Heart left ventricle (tissue), 16 donors: ENCODE measurements at regions of chr16 and their contacts with region 1.

Region 1: GRCh38 chr16:31142109-31143010 is 6.8 kb upstream of the PRSS8 start:
- DNase-seq: peak; percentile 99
- ATAC-seq: peak; percentile 98 to 99 (median 98)
- H3K4me3 ChIP-seq: peak overlapping the region; percentile 18 to 67 (median 55)
- H3K27ac ChIP-seq: peak overlapping the region in 11 of 12 donors; percentile 75 to 91 (median 82)
- H3K4me1 ChIP-seq: peaks cover 3 to 39% (median 27%) of the 10 kb centered on the region in 12 donors
- H3K27me3 ChIP-seq: peaks cover 0 to 4% (median 0%) of the 10 kb centered on the region in 9 donors
- CTCF ChIP-seq: peak; percentile 80 to 99 (median 96)
- POLR2A ChIP-seq: peak in 1 of 2 donors; percentile 44

Region 2: DNA sequence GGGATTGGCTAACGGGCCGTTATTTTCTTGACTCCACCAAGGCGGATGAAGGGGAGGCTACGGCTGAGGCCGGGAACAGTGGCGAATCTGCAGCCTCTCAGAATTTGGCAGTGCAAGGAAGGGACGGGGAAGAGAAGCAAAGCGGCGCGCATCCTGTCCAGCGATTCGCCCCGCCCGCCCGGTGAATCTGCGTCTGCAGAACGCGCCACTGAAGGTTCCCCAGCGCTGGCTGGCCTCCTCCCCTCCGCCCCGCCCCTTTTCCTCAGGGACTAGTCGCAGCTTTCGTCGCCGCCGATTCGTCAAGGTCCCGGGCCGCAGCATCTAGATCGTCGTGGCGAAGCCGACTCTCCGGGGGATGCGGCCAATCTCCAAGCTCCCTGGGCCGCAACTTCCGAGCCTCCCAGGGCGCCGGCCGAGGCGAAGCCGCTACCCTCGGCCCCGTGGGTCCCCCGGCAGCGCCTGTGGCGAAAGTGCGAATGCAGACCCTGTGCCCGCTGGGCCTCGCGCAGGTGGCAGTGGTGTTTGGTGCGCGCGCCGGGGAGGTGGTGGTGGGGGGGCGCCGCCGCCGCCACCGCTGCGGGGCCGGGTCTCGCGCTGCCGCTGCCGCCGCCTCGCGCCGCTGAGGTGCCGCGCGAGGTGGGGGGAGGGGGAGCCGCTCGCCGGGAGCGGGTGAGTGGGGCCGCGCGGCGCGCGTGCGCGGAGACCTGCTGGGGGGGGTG is 184.7 kb before region 1 on chr16 and contains the start of gene SETD1A:
- intact Hi-C with region 1: loop called in 1 of 10 experiments (anchors 5 kb)
- DNase-seq: peak; percentile 98 to 99 (median 98)
- ATAC-seq: peak; percentile 90 to 96 (median 91)
- H3K4me3 ChIP-seq: peak within 1 kb of the TSS; percentile 37 to 93 (median 82)
- H3K27ac ChIP-seq: peak within 1 kb of the TSS; percentile 86 to 99 (median 98)
- H3K4me1 ChIP-seq: peaks cover 0 to 37% (median 24%) of the 10 kb centered on the region in 12 donors
- H3K27me3 ChIP-seq: no peaks in the 10 kb centered on the region
- CTCF ChIP-seq: peak in 1 of 12 donors; percentile 7
- POLR2A ChIP-seq: peak in 1 of 2 donors; percentile 44
- total RNA-seq, gene SETD1A: 4.6 to 12.1 (median 9.0) TPM

Region 3: GRCh38 chr16:30997000-30997886 is 145.1 kb before region 1 on chr16:
- intact Hi-C with region 1: loop called in 1 of 10 experiments (anchors 2 kb)
- DNase-seq: peak; percentile 82 to 92 (median 85)
- ATAC-seq: peak; percentile 80 to 95 (median 94)
- H3K4me3 ChIP-seq: peak overlapping the region; percentile 34 to 65 (median 59)
- H3K27ac ChIP-seq: peak overlapping the region in 11 of 12 donors; percentile 27 to 86 (median 69)
- H3K4me1 ChIP-seq: peaks cover 0 to 26% (median 15%) of the 10 kb centered on the region in 12 donors
- H3K27me3 ChIP-seq: no peaks in the 10 kb centered on the region
- CTCF ChIP-seq: no peak
- POLR2A ChIP-seq: peak in 1 of 2 donors; percentile 56

Region 4: GRCh38 chr16:31063843-31064611 is 78.3 kb before region 1 on chr16:
- intact Hi-C with region 1: no loop called
- DNase-seq: peak in 1 of 5 donors; percentile 35
- ATAC-seq: no peak
- H3K4me3 ChIP-seq: peak overlapping the region in 2 of 12 donors; percentile 10 to 20
- H3K27ac ChIP-seq: peak overlapping the region in 10 of 12 donors; percentile 6 to 87 (median 77)
- H3K4me1 ChIP-seq: peaks cover 0 to 38% (median 12%) of the 10 kb centered on the region in 12 donors
- H3K27me3 ChIP-seq: no peaks in the 10 kb centered on the region
- CTCF ChIP-seq: no peak
- POLR2A ChIP-seq: no peak

Region 5: DNA sequence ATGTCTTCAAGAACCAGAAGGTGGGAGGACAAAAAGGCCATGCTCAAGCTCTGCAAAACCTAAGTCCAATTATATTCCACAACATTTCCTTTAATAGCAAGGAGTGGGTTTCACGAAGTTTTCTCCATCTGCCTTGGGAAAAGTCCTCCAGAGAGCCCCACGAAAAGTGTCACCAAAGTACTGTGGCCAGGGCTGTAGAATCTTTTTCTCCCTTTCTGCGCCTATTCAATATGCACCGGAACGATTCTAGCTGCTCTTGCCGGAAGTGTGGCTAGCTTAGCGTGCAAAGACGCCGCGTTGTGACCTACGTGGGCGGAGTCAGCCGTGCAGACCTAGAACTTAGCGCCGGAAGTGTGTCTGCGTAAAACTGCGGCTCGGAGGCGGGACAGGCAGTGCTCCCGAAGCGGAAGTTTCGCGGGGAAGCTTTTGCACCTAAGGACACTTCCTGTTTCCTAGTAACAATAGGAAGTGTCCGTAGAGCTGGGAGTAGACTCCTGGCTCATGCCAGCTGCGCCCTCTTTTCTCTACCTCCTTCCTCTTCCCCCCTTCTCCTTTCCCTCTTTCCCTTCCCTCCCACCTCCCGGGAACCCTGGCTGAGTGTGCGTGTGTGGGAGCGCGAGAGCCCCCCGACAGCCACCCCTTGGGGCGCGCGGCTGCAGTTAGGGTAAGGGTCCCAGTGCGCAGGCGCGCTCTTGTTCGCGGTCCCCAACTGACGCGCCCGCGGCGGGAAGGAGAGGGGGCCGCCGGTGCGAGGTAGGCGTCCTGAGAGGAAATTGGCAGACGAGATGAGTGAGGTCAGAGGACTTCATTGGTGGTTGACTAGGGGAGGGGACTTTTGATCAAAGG is 68.2 kb before region 1 on chr16 and contains the starts of genes ZNF646 and ZNF668:
- intact Hi-C with region 1: loop called in 2 of 10 experiments (anchors 1 kb)
- DNase-seq: peak; percentile 98 to 99 (median 99)
- ATAC-seq: peak; percentile 94 to 97 (median 96)
- H3K4me3 ChIP-seq: peak within 1 kb of the TSS; percentile 66 to 100 (median 84)
- H3K27ac ChIP-seq: peak within 1 kb of the TSS; percentile 87 to 99 (median 96)
- H3K4me1 ChIP-seq: peaks cover 3 to 39% (median 24%) of the 10 kb centered on the region in 12 donors
- H3K27me3 ChIP-seq: no peaks in the 10 kb centered on the region
- CTCF ChIP-seq: peak in 1 of 12 donors; percentile 8
- POLR2A ChIP-seq: peak in 1 of 2 donors; percentile 65
- total RNA-seq, gene ZNF646: 8.3 to 15.5 (median 10.3) TPM
- total RNA-seq, gene ZNF668: 3.5 to 11.4 (median 5.8) TPM

Region 6: DNA sequence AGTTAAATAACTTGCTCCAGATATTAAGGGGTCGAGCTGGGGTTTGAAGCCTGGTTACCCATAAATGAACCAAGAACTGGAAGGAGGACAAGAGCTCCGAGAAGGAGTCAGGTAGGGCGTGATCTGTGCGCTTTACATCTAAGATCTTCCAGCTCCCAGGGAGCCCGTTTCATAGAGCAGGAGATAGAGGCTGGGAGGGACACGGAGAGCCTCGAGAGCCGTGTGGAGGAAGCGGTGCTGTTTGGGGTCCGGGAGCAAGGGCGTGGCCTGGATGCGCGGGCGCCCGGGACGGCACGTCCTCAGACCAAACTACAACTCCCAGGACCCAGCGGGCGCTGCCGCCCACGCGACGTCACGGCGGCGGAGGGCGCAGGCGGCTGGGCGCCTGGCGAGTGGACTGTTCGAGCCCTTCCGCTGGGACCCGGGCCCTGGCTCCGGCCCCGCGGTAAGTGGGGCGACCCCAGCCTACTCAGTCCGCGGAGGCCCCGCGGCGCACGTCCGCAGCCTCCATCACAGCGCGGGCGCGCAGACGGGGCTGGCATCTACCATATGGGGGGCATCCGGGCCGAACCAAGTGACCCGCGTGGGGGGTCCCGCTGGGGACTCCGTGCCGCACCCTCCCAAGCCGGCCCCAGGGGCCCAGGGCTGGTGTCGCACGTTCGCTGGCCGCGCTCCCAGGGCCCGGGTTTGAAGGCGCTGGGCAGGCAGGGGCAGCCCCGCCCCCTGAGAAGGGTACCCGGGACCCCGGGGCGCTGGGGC is 34.1 kb before region 1 on chr16 and contains the start of gene BCKDK:
- intact Hi-C with region 1: loop called in 4 of 10 experiments (anchors 2 to 5 kb)
- DNase-seq: peak; percentile 80 to 90 (median 85)
- ATAC-seq: peak; percentile 63 to 84 (median 78)
- H3K4me3 ChIP-seq: peak within 1 kb of the TSS; percentile 67 to 100 (median 93)
- H3K27ac ChIP-seq: peak within 1 kb of the TSS; percentile 63 to 99 (median 93)
- H3K4me1 ChIP-seq: peaks cover 4 to 46% (median 28%) of the 10 kb centered on the region in 12 donors
- H3K27me3 ChIP-seq: no peaks in the 10 kb centered on the region
- CTCF ChIP-seq: no peak
- POLR2A ChIP-seq: peak in 1 of 2 donors; percentile 75
- total RNA-seq, gene BCKDK: 61.9 to 134 (median 70.0) TPM

Region 7: GRCh38 chr16:31168848-31169247 is 26.5 kb after region 1 on chr16:
- intact Hi-C with region 1: no loop called
- DNase-seq: no peak
- ATAC-seq: no peak
- H3K4me3 ChIP-seq: no peak overlapping the region
- H3K27ac ChIP-seq: peak overlapping the region in 1 of 12 donors; percentile 5
- H3K4me1 ChIP-seq: peaks cover 0 to 10% (median 0%) of the 10 kb centered on the region in 12 donors
- H3K27me3 ChIP-seq: no peaks in the 10 kb centered on the region
- CTCF ChIP-seq: no peak
- POLR2A ChIP-seq: no peak

Region 8: GRCh38 chr16:31179747-31180459 is 37.5 kb after region 1 on chr16 and contains the start of gene FUS:
- intact Hi-C with region 1: loop called in 3 of 10 experiments (anchors 2 kb)
- DNase-seq: peak; percentile 91 to 96 (median 93)
- ATAC-seq: peak; percentile 84 to 90 (median 88)
- H3K4me3 ChIP-seq: peak within 1 kb of the TSS; percentile 60 to 99 (median 86)
- H3K27ac ChIP-seq: peak within 1 kb of the TSS; percentile 87 to 99 (median 94)
- H3K4me1 ChIP-seq: peaks cover 0 to 47% (median 37%) of the 10 kb centered on the region in 12 donors
- H3K27me3 ChIP-seq: peaks cover 0 to 5% (median 0%) of the 10 kb centered on the region in 9 donors
- CTCF ChIP-seq: peak in 1 of 12 donors; percentile 8
- POLR2A ChIP-seq: peak; percentile 67 to 96
- total RNA-seq, gene FUS: 20.3 to 213 (median 127) TPM

Region 9: DNA sequence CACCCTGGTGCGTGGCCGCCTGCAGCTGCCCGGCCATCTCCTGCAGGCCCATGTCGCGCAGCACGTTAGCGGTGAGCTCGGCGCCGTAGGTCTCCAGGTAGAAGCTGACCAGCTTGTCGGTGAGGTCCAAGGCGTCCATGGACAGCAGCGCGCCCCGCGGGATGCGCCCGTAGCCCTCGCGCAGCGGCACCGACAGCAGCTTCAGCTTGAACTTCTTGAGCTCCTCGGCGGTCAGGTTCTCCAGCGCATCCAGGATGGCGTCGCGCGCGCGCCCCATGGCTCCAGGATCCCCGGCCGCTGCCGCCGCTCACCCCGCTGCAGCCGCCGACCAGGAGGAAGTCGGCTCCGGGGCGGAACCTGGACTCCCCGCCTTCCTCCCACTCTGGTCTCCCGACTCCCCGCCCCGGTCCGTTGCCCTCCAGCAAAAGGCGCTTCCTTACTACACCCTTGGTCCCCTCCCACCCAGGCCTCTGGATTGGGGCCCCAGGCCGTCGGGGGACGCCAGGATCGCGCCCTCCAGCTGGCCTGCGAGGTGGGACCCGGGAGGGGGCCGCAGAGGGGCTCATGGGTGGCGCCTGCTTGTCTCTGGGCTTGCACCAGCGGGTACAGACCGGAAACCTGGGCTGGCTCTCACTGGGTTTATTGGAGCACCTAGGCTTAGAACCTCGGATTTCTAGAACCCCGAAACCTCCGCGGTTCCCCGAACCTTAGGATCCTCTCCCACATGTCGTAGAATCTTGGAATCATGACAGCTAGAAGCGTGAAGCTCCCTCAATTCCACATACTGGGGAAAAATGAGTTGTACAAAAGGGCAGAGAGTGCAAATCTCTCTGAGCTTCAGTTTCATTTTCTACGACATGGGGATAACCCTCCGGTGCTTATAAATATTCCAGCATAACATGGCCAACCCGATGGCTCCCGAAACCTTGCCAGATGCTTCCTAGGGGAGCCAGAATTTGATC is 60.3 kb after region 1 on chr16 and contains the start of gene PYCARD:
- intact Hi-C with region 1: no loop called
- DNase-seq: peak; percentile 70 to 85 (median 73)
- ATAC-seq: peak; percentile 50 to 81 (median 76)
- H3K4me3 ChIP-seq: peak within 1 kb of the TSS; percentile 38 to 91 (median 70)
- H3K27ac ChIP-seq: peak within 1 kb of the TSS in 11 of 12 donors; percentile 19 to 90 (median 53)
- H3K4me1 ChIP-seq: peaks cover 0 to 56% (median 11%) of the 10 kb centered on the region in 12 donors
- H3K27me3 ChIP-seq: no peaks in the 10 kb centered on the region
- CTCF ChIP-seq: no peak
- POLR2A ChIP-seq: no peak
- total RNA-seq, gene PYCARD: 2.0 to 42.2 (median 5.2) TPM